GM18951 (cell line): ENCODE measurements at regions of chr1 and their contacts with region 1.

Region 1: DNA sequence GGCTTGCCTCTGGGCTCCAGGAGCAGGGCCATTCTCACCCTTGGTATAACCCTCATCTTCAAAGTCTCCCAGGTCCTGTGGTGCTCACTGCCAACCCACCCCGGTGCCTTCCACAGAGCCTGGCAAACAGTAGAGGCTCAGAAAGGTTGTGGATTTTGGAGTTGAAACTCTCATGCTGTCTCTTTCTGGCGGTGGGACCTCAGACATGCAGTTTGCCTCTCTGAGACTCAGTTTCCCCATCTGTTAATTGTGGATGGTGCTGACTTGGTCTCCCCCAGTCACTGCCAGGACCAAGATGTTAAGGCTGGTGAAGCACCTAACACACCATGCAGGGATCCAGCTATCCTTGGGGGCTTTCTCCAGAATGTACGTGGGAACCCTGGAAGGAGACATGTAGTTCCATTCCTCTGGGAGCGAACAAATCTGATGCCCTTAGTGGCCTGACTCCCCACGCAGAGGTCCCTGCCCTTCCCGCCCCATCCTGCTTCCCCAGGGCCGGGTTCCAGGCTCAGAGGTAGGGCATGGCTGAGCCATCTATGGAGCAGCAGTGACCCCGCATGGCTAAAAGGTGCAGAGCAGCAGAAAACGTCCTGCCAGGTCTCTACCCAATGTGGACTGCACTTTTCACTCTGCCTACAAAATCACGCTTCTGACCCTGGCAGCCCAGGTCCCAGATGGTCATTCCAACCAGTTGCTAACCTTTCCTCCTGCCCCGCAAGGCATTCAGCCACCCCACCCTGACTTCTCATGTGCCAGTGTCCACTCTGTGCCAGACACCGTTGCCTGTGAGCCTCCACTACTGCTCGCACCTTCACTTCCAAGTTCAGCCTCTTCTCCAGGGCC is 9.2 kb upstream of the TTC22 start:
- POLR2A ChIP-seq: no peak

Region 2: DNA sequence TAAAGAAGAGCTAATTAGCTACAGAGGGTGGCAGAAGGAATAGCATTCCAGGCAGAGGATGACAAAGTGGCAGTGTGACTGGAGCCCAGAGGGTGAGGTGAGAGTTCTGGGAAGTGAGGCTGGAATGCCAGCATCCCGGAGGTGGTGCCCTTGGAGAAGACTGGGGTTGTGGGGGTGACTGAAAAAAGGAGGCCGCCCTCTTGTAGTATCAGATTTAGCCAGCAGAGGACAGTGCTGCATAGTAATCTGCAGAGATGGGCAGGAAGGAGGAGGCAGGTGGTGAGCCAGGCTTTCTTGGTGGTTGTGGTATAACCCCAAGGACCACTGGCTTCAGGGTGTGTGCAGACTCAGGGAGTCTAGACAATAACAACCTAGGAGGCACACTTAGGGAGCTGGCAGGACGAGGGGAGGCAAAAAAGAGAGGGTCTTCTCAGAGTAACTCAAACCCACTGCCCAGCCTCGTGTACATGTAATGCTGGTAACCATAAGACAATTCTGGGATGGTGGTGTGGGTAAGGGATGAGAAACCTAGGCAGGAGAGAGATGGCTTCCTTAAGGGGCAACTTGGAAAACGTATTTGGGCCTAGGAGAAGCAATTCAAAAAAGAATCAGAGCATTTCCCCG is 138.2 kb before region 1 on chr1:
- in situ Hi-C with region 1: loop called (anchors 10 kb)
- POLR2A ChIP-seq: no peak

Region 3: DNA sequence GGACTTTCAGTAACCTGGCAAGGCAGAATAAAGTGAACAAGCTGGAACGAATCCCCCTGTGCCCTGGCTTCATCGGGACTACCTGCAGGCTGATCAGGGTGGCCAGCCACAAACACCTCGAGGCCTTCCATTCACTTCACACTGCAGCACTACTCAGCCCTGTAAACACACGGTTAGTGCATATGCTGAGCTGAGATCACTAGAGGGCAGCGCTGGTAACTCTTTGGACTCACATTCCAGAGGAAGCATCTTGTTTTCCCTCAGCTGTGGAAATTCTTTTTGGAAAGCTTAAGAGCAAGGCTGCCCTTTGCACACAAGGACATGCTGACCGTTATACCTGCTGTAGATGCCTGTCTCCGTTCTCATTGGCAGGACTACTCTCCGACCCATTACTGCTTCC is 261.2 kb after region 1 on chr1:
- in situ Hi-C with region 1: no loop called
- POLR2A ChIP-seq: no peak